Astrocyte of the cerebellum (primary cell): ENCODE measurements at regions of chr3 and their contacts with region 1.

Region 1: DNA sequence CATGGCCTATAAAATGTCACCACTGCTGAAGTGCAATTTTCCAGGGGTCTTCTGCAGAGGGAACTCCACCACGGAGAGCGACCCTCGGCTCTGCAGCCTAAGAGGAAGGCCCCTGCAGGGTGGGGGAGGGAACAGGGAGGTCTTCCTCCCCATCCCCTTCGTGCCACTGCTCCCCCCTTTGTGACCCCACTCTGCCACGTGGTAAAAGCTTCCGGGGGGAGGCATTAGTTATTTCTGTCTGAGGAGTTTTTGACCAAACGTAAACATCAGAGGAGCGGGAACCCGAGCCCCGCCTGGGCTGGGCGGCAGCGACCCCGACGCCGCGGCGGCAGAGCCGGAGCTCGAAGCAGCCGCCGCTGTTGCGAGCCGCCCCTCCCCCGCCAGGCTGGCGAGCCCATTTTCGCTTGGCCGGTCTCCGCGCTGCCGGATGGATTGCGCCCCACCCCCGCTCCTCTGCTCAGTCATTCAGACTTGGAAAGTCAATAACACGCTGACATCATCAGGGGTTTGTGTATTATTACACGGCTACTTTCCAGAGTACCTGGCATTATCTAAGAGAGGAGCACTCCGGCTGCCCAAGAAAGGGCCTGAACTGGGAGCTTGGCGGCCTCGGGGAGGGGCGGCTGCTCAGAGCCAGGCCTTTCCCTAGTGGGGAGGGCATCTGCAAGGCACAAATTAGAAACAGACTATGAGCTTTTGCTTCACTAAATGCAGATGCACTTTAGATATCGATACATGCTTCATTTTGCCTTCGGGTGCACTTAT is 162.5 kb upstream of the TBL1XR1 start:
- DNase-seq: peak; percentile 99
- H3K4me3 ChIP-seq: no peak overlapping the region
- CTCF ChIP-seq: no peak

Region 2: DNA sequence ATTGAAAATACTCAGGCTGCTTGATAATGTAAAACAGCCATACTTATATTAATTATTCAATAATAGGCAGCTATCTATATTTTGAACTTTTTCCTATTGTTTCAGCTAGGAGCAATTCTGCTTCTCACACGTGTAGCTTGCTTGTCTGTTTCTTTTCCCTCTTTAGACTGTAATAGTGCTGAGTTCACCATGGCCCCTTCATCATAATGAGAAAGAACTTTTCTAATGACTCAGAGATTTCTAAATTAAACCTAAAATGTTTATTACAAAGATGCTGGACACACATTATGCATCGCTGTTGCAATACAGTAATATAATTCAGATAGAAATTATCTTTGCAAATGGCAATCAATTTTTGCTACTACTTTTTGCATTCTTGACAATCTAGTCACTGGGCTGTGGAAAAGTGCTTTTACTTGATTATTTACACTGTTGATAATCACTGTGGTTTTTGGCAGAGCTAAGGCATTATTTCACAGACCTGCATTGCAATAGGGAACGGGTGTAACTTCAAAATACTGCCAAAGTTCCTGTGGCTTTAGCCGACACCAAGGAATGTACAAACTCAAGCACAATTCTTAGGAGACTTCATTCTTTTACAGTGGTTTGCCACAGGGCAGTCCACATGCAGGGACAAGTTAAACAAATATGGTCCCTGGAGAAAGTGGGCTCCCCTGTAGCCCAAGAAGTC is 118.5 kb after region 1 on chr3:
- in situ Hi-C with region 1: loop called (anchors 5 kb)
- DNase-seq: peak; percentile 100
- H3K4me3 ChIP-seq: no peak overlapping the region
- CTCF ChIP-seq: no peak